ENCODE measurements at regions of chr6 and their contacts with region 1.

Region 1: DNA sequence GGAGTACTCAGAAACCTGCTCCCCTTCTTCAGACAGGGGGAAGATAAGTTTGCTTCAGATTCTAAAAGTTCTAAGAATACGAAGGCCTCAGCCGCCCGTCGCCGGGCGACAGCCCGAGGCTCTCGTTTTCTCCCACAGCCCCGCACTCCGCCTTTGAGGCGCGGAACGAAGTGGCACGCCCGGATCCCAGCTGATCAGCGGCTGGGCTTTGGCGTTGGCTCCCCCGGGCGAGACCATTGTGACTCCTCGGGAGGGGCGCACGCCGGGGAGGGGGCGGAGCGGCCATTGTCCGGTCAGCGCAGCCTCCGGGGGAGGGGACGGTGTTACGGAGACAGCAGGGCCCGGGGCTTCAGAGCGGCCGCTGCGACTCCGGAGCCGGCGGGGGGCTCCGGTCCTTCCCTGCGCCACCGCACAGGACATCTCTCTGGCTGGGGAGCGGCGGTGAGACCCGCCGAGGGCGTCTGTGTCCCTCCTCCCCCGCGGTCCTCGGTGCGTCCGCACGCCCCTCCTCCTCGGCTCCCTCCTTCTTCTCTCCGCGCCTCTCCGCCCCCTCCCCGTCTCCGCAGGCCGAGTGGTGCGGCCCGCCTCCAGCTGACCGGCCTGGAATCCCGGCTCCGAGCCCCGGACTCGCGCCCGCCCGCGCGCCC is at the start of gene ZFAND3:
- DNase-seq: peak; percentile 97 to 98
- ATAC-seq: peak; percentile 95 to 99 (median 98)
- H3K4me3 ChIP-seq: peak within 1 kb of the TSS; percentile 55 to 90 (median 78)
- H3K27ac ChIP-seq: peak within 1 kb of the TSS; percentile 90 to 100 (median 98)
- H3K4me1 ChIP-seq: peaks cover 7 to 51% (median 47%) of the 10 kb centered on the region in 9 donors
- H3K27me3 ChIP-seq: no peaks in the 10 kb centered on the region
- CTCF ChIP-seq: no peak
- total RNA-seq, gene ZFAND3: 79.5 to 123 (median 108) TPM

Region 2: GRCh38 chr6:37860226-37860839 is 41.0 kb after region 1 on chr6:
- intact Hi-C with region 1: loop called in 2 of 10 experiments (anchors 5 kb)
- DNase-seq: peak in 1 of 2 donors; percentile 34
- ATAC-seq: no peak
- H3K4me3 ChIP-seq: no peak overlapping the region
- H3K27ac ChIP-seq: no peak overlapping the region
- H3K4me1 ChIP-seq: peaks cover 0 to 62% (median 4%) of the 10 kb centered on the region in 9 donors
- H3K27me3 ChIP-seq: no peaks in the 10 kb centered on the region
- CTCF ChIP-seq: peak; percentile 19 to 73 (median 64)

Region 3: GRCh38 chr6:37897321-37897720 is 78.0 kb after region 1 on chr6:
- intact Hi-C with region 1: no loop called
- DNase-seq: no peak
- ATAC-seq: no peak
- H3K4me3 ChIP-seq: no peak overlapping the region
- H3K27ac ChIP-seq: no peak overlapping the region
- H3K4me1 ChIP-seq: peaks cover 0 to 9% (median 3%) of the 10 kb centered on the region in 9 donors
- H3K27me3 ChIP-seq: no peaks in the 10 kb centered on the region
- CTCF ChIP-seq: no peak

Region 4: DNA sequence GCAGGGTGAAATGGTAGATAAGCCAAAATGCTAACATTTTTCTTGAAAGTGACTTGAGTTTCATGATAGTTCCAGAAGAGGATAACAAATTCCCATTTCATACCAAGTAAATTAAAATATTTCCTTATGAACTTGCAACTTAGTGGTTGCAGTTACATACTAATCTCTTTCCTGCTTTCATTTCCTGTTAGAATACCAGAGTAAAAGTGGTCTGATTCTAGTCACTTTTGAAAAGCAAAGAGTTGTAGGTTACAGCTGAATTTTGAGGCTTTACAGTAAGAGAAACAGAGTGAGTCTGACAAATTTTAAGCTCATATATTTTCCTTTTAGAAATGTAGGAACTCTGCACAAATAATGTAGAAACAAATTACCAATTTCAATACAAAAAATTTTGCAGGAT is 117.6 kb after region 1 on chr6:
- intact Hi-C with region 1: loop called in 1 of 10 experiments (anchors 10 kb)
- DNase-seq: no peak
- ATAC-seq: no peak
- H3K4me3 ChIP-seq: no peak overlapping the region
- H3K27ac ChIP-seq: no peak overlapping the region
- H3K4me1 ChIP-seq: peaks cover 0 to 51% (median 42%) of the 10 kb centered on the region in 9 donors
- H3K27me3 ChIP-seq: no peaks in the 10 kb centered on the region
- CTCF ChIP-seq: no peak

Region 5: DNA sequence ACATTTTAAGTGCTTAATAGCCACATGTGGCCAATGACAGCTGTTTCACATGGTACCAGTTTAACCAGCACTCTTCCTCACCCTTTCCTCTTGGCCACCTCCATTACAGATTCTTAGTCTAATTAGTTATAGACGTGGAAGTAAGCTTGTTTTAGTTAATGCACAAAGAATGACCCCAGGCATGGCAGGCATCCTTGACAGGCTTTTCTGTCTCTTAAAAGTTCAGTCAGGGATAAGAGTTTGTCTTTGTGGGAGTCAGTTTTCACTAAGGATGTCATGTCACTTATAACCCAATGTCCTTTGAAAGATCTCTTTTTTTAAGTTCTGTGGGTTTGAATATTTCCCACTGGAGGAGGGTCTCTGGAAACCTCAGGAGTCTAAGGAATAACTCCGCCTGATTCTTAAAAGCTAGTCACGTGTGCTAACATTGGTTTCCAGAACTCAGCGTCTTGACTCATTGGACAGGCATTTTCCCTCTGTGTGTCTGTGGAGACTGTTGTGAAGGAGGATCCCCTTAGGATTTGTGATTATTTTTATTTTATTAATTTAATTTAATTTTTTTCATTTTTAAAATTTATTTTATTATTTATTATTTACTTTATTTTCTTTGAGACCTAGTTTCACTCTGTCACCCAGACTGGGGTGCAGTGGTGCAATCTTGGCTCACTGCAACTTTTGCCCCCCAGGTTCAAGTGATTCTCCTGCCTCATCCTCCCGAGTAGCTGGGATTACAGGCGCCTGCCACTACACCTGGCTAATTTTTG is 171.6 kb after region 1 on chr6:
- intact Hi-C with region 1: loop called in 1 of 10 experiments (anchors 10 kb)
- DNase-seq: peak in 1 of 2 donors; percentile 8
- ATAC-seq: peak in 6 of 8 donors; percentile 40 to 74 (median 64)
- H3K4me3 ChIP-seq: no peak overlapping the region
- H3K27ac ChIP-seq: peak overlapping the region in 2 of 10 donors; percentile 28 to 46
- H3K4me1 ChIP-seq: peaks cover 10 to 99% (median 67%) of the 10 kb centered on the region in 9 donors
- H3K27me3 ChIP-seq: no peaks in the 10 kb centered on the region
- CTCF ChIP-seq: no peak

Region 6: GRCh38 chr6:38001386-38001785 is 182.1 kb after region 1 on chr6:
- intact Hi-C with region 1: loop called in 2 of 10 experiments (anchors 10 kb)
- DNase-seq: no peak
- ATAC-seq: peak in 2 of 8 donors; percentile 16 to 19
- H3K4me3 ChIP-seq: no peak overlapping the region
- H3K27ac ChIP-seq: no peak overlapping the region
- H3K4me1 ChIP-seq: peaks cover 0 to 26% (median 14%) of the 10 kb centered on the region in 9 donors
- H3K27me3 ChIP-seq: no peaks in the 10 kb centered on the region
- CTCF ChIP-seq: no peak

Region 7: DNA sequence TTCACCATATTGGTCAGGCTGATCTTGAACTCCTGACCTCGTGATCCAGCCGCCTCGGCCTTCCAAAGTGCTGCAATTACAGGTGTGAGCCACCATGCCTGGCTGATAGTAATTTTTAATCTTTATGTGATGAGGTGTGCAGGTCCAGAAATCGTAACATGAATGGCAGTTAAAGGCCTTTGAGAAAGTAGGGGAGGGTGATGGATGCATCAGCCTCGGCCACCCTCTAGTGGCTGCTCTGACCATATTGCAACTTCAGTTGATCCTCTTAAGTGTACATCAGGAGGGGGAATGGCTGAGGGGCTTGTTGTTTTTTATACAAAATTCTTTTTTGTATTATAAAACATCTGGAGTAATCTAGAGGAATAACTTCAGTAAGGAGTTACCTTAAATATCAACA is 193.3 kb after region 1 on chr6:
- intact Hi-C with region 1: loop called in 2 of 10 experiments (anchors 10 kb)
- DNase-seq: no peak
- ATAC-seq: peak in 6 of 8 donors; percentile 52 to 80 (median 72)
- H3K4me3 ChIP-seq: no peak overlapping the region
- H3K27ac ChIP-seq: no peak overlapping the region
- H3K4me1 ChIP-seq: peaks cover 0 to 39% (median 13%) of the 10 kb centered on the region in 9 donors
- H3K27me3 ChIP-seq: no peaks in the 10 kb centered on the region
- CTCF ChIP-seq: peak; percentile 30 to 76 (median 66)

Measured in heart right ventricle (tissue), 16 donors.